GM18951 (cell line): ENCODE measurements at regions of chr13 and their contacts with region 1.

Region 1: GRCh38 chr13:51134763-51135365 is 23.8 kb upstream of the C13orf42 start:
- POLR2A ChIP-seq: no peak

Region 2: GRCh38 chr13:51286135-51287002 is 151.5 kb after region 1 on chr13:
- in situ Hi-C with region 1: loop called (anchors 10 kb)
- POLR2A ChIP-seq: no peak